ENCODE measurements at regions of chr5 and their contacts with region 1.

Region 1: GRCh38 chr5:57137401-57137800 is 36.5 kb upstream of the GPBP1 start:
- DNase-seq: no peak
- H3K4me3 Mint-ChIP-seq: no peak overlapping the region
- H3K27ac Mint-ChIP-seq: no peak overlapping the region
- H3K4me1 Mint-ChIP-seq: no peaks in the 10 kb centered on the region
- H3K27me3 Mint-ChIP-seq: peaks cover 14% of the 10 kb centered on the region

Region 2: DNA sequence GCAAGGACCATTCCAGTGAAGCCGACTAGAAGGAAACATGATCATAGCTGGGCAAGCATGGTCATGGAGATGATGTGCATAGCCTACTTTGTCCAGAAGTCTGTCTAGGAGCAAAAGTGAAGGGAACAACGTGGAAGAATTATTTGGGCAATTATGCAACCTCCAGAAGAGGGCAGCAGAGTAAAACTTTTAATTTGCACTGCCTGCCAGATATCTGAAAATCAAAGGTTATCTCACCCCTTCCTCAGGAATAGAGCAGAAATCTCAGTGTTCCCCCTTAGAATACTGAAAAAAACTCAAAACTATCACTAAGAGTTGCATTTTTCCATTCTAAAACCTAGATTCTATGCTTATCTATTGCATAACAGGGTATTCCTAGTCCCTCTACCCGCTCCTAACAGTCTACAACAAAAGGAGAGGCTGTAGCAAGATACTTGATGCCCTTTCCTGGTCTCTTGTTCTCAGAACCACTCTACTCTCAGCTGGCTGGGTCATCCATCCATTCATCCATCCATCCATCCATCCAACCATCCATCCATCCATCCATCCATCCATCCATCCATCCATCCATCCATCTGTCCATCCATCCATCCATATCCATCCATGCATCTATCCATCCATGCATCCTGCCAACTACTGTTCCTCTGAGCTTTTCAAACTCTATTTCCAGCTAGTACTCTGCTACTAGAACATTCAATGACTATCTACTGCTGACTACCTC is 236.4 kb before region 1 on chr5:
- intact Hi-C with region 1: loop called (anchors 1 kb)
- DNase-seq: no peak
- H3K4me3 Mint-ChIP-seq: no peak overlapping the region
- H3K27ac Mint-ChIP-seq: no peak overlapping the region
- H3K4me1 Mint-ChIP-seq: peaks cover 2% of the 10 kb centered on the region
- H3K27me3 Mint-ChIP-seq: peaks cover 14% of the 10 kb centered on the region

Region 3: DNA sequence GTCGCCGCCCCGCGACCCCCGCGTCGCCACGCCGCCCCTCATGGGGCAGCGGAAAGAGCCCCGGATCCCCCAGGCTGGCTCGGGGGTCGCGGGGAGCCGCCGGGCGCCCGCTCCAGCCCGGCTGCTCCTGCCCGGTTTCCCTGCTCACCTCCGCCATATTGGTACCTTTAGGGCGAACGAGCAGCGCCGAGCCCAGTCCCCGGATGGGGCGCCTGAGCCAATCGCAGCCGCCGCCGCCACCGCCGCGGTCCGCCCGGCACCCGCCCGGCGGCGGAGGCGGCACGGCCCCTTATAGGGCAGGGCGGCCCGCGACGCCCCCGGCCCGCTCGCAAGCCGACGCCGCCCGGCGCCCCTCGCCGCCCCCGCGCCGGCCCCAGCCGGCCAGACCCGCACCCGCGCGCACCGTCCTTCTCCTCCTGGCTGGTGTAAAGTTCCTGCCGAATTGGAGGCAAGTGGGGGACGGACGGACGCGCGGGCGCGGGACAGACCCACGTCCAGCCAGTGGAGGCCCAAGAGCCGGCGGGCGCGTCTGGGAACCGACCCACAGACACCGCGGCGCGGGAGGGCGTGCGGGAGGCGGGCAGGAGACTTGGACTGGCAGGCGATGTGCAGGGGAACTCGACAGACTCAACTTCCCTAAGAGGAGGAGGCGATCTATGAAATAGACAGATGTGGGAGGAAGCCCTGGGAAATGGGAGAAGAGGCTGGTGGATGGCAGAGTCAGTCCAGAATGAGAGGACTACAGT is 185.3 kb before region 1 on chr5 and contains the start of gene MIER3:
- intact Hi-C with region 1: loop called (anchors 1 kb)
- DNase-seq: peak; percentile 77
- H3K4me3 Mint-ChIP-seq: peak within 1 kb of the TSS; percentile 97
- H3K27ac Mint-ChIP-seq: peak within 1 kb of the TSS; percentile 82
- H3K4me1 Mint-ChIP-seq: peaks cover 23% of the 10 kb centered on the region
- H3K27me3 Mint-ChIP-seq: peaks cover 40% of the 10 kb centered on the region
- total RNA-seq, gene MIER3: 24.1 and 28.3 TPM in 2 replicates

Region 4: GRCh38 chr5:57221049-57221568 is 83.7 kb after region 1 on chr5:
- intact Hi-C with region 1: loop called (anchors 1 kb)
- DNase-seq: no peak
- H3K4me3 Mint-ChIP-seq: no peak overlapping the region
- H3K27ac Mint-ChIP-seq: peak overlapping the region; percentile 2
- H3K4me1 Mint-ChIP-seq: peaks cover 18% of the 10 kb centered on the region
- H3K27me3 Mint-ChIP-seq: no peaks in the 10 kb centered on the region

Measured in activated T-helper 2 cell treated with anti-CD3 and anti-CD28 coated beads, Interferon-gamma antibody, Interleukin-2, Interleukin-4, amounts not matched to agents 10 μg/mL and 5 μg/mL and 100 μg/mL, durations not matched to agents 14 hours and 24 hours and 36 hours (primary cell).